ENCODE measurements at regions of chr14 and their contacts with region 1.

Region 1: DNA sequence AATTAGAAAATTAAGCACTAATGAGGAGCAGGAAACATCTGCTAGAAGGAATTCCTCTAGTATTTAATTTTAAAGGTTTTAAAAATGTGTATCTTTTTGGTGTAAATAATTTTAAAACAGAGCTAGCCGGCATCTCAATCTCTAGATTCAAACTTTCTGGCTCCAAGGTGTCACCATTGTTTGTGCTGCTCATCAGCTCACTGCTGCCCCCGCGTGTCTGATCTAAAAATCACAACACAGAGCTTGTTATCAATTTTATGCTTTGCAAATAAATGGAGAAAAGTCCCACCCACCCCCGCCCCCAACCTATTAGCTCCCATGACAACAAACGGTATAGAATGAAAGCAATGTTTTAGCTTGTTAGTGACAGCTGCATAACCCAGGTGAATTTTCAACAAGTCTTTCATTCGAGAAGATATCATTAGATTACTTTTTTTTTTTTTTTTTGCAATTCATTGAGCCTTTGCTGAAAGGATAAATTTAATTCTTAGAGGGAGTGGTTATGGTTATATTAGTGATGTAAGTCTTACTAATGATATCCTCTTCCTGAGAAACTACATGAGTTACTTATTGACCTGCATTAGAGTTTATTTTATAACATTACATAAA is 11.3 kb upstream of the ABHD12B start:
- DNase-seq: peak; percentile 72 to 93 (median 87)
- ATAC-seq: peak; percentile 68 to 80 (median 78)
- H3K4me3 ChIP-seq: peak overlapping the region; percentile 55 to 70
- H3K4me3 Mint-ChIP-seq: peak overlapping the region; percentile 87 to 93 (median 93)
- H3K27ac ChIP-seq: no peak overlapping the region
- H3K27ac Mint-ChIP-seq: peak overlapping the region; percentile 84 to 91
- H3K4me1 ChIP-seq: peaks cover 4 to 8% of the 10 kb centered on the region in 2 experiments
- H3K4me1 Mint-ChIP-seq: peaks cover 8 to 16% (median 15%) of the 10 kb centered on the region in 3 donors
- H3K27me3 ChIP-seq: no peaks in the 10 kb centered on the region
- H3K27me3 Mint-ChIP-seq: peaks cover 0 to 3% of the 10 kb centered on the region in 2 donors

Region 2: GRCh38 chr14:49940808-49941421 is 919.7 kb before region 1 on chr14:
- CTCF ChIA-PET with region 1: no interaction called
- POLR2A ChIA-PET with region 1: no interaction called
- DNase-seq: peak in 12 of 35 experiments; percentile 7 to 47 (median 14)
- ATAC-seq: peak; percentile 52 to 80 (median 65)
- H3K4me3 ChIP-seq: no peak overlapping the region
- H3K4me3 Mint-ChIP-seq: peak overlapping the region; percentile 13 to 62 (median 21)
- H3K27ac ChIP-seq: peak overlapping the region; percentile 71
- H3K27ac Mint-ChIP-seq: peak overlapping the region; percentile 84 to 93
- H3K4me1 ChIP-seq: peaks cover 29 to 47% of the 10 kb centered on the region in 2 experiments
- H3K4me1 Mint-ChIP-seq: peaks cover 60 to 69% (median 68%) of the 10 kb centered on the region in 3 donors
- H3K27me3 ChIP-seq: no peaks in the 10 kb centered on the region
- H3K27me3 Mint-ChIP-seq: no peaks in the 10 kb centered on the region

Region 3: DNA sequence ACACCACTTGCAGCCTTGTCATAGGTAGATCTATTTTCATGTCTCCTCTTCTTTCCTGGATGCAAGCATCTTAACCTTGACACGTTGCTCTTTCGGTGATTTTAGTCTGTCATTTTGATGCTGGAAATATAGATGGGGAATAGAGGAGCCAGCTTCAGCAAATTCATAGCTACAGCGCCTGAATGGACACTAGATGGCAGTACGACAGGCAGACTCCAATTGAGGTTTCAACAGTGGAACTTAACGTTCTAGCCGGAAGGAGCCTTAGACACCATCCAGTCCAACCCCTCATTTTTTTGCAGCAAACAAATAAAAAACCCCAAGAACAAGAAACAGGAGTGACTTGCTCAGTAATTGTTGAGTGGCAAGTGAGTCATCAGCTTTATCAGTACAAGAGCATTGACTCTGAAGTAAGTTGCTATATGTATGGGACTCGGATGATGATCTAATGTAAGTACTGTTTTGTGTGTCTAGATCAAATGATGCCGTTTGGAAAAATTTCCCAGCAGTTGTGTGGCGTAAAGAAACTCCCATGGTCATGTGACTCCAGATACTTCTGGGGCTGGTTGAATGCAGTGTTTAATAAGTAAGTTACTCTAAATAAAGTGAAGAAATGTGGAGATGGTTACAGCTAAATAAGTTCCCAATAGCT is 539.4 kb before region 1 on chr14:
- CTCF ChIA-PET with region 1: interaction called, 3 to 23 read pairs
- POLR2A ChIA-PET with region 1: interaction called in 1 of 2 experiments, 5 read pairs
- DNase-seq: peak; percentile 25 to 89 (median 61)
- ATAC-seq: peak; percentile 96 to 99 (median 98)
- H3K4me3 ChIP-seq: no peak overlapping the region
- H3K4me3 Mint-ChIP-seq: no peak overlapping the region
- H3K27ac ChIP-seq: peak overlapping the region; percentile 72
- H3K27ac Mint-ChIP-seq: no peak overlapping the region
- H3K4me1 ChIP-seq: no peaks in the 10 kb centered on the region
- H3K4me1 Mint-ChIP-seq: peaks cover 10 to 27% (median 26%) of the 10 kb centered on the region in 3 donors
- H3K27me3 ChIP-seq: no peaks in the 10 kb centered on the region
- H3K27me3 Mint-ChIP-seq: no peaks in the 10 kb centered on the region

Region 4: DNA sequence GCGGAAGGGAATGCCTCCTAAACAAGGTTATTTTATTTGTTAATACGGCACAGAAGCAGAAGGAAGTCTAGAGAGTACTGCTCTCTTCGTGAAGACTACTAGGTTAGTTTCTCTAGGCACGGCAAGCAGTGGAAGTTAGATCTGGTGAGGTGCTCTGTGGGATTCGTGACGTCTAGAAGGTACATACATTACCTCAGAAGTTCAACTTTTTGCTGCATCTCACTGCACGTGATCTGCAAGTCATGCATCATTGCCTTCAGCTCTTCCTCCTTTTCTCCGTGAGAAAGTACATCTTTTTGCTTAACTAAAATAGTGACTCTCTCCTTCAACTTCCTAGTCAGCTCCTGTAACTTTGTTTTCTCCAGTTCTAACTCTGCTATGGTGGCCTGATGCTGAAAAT is 104.3 kb before region 1 on chr14:
- CTCF ChIA-PET with region 1: interaction called, 9 to 13 read pairs
- POLR2A ChIA-PET with region 1: interaction called in 1 of 2 experiments, 7 read pairs
- DNase-seq: peak in 1 of 35 experiments; percentile 14
- ATAC-seq: no peak
- H3K4me3 ChIP-seq: no peak overlapping the region
- H3K4me3 Mint-ChIP-seq: no peak overlapping the region
- H3K27ac ChIP-seq: no peak overlapping the region
- H3K27ac Mint-ChIP-seq: no peak overlapping the region
- H3K4me1 ChIP-seq: no peaks in the 10 kb centered on the region
- H3K4me1 Mint-ChIP-seq: peaks cover 0 to 4% (median 0%) of the 10 kb centered on the region in 3 donors
- H3K27me3 ChIP-seq: no peaks in the 10 kb centered on the region
- H3K27me3 Mint-ChIP-seq: no peaks in the 10 kb centered on the region

Region 5: DNA sequence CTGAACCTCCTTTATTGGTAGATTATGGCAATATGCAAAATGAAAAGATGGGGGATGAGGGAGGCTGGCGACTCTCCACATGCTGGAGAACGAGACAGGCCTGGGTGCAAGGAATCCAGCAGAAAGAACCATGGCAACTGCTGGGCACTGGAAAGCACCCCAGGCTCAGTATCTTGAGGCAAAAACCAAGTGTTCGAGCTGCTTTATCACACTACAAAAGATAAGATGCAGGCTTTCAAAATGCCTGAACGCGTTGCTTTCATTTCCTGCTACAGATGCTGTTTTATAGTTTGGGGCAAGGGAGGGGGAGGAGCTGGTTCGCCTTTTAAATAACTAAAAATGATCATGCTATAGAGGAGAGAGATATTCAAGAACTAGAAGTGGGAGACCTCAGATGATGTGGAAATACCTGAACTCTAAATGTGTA is 68.5 kb before region 1 on chr14:
- CTCF ChIA-PET with region 1: interaction called, 14 to 57 read pairs
- POLR2A ChIA-PET with region 1: interaction called, 3 to 5 read pairs
- DNase-seq: peak in 18 of 35 experiments; percentile 8 to 61 (median 22)
- ATAC-seq: peak; percentile 64 to 75 (median 69)
- H3K4me3 ChIP-seq: peak overlapping the region; percentile 20 to 23
- H3K4me3 Mint-ChIP-seq: peak overlapping the region; percentile 66 to 74 (median 74)
- H3K27ac ChIP-seq: peak overlapping the region; percentile 76
- H3K27ac Mint-ChIP-seq: peak overlapping the region; percentile 91 to 98
- H3K4me1 ChIP-seq: peaks cover 54 to 55% of the 10 kb centered on the region in 2 experiments
- H3K4me1 Mint-ChIP-seq: peaks cover 90 to 93% (median 92%) of the 10 kb centered on the region in 3 donors
- H3K27me3 ChIP-seq: no peaks in the 10 kb centered on the region
- H3K27me3 Mint-ChIP-seq: no peaks in the 10 kb centered on the region

Region 6: GRCh38 chr14:50830044-50830931 is 30.3 kb before region 1 on chr14:
- CTCF ChIA-PET with region 1: interaction called, 5 to 24 read pairs
- POLR2A ChIA-PET with region 1: interaction called, 3 to 9 read pairs
- DNase-seq: peak; percentile 29 to 84 (median 62)
- ATAC-seq: peak; percentile 62 to 69 (median 66)
- H3K4me3 ChIP-seq: peak overlapping the region; percentile 64 to 87
- H3K4me3 Mint-ChIP-seq: peak overlapping the region; percentile 90 to 96 (median 95)
- H3K27ac ChIP-seq: peak overlapping the region; percentile 70
- H3K27ac Mint-ChIP-seq: peak overlapping the region; percentile 93 to 95
- H3K4me1 ChIP-seq: peaks cover 38 to 39% of the 10 kb centered on the region in 2 experiments
- H3K4me1 Mint-ChIP-seq: peaks cover 69 to 76% (median 73%) of the 10 kb centered on the region in 3 donors
- H3K27me3 ChIP-seq: no peaks in the 10 kb centered on the region
- H3K27me3 Mint-ChIP-seq: no peaks in the 10 kb centered on the region

Region 7: GRCh38 chr14:51643140-51643539 is 782.6 kb after region 1 on chr14:
- CTCF ChIA-PET with region 1: no interaction called
- POLR2A ChIA-PET with region 1: no interaction called
- DNase-seq: no peak
- ATAC-seq: no peak
- H3K4me3 ChIP-seq: no peak overlapping the region
- H3K4me3 Mint-ChIP-seq: no peak overlapping the region
- H3K27ac ChIP-seq: no peak overlapping the region
- H3K27ac Mint-ChIP-seq: no peak overlapping the region
- H3K4me1 ChIP-seq: no peaks in the 10 kb centered on the region
- H3K4me1 Mint-ChIP-seq: no peaks in the 10 kb centered on the region
- H3K27me3 ChIP-seq: peaks cover 0 to 5% of the 10 kb centered on the region in 2 experiments
- H3K27me3 Mint-ChIP-seq: peaks cover 2% of the 10 kb centered on the region in 2 donors